Sigmoid colon (tissue), 7 donors: ENCODE measurements at regions of chr1 and their contacts with region 1.

Region 1: DNA sequence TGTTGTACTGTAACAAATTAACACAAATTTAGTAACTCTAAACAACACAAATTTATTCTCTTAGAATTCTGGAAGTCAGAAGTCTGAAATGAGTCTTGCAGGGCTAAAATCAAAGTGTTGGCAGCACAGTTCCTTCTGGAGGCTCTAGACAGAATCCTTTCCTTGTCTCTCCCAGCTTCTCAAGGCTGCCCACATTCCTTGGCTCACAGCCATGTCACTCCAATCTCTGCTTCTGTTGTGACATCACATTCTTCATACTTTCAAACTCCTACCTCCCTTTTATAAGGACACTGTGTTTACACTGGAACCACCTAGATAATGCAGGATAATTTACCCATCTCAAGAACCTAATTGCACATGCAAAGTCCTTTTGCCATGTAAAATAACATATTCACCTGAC is 225.0 kb upstream of the PRMT6 start:
- DNase-seq: no peak
- H3K4me3 ChIP-seq: no peak overlapping the region
- H3K27ac ChIP-seq: no peak overlapping the region
- H3K4me1 ChIP-seq: peaks cover 0 to 15% (median 5%) of the 10 kb centered on the region in 4 donors
- H3K27me3 ChIP-seq: no peaks in the 10 kb centered on the region
- CTCF ChIP-seq: no peak
- EP300 ChIP-seq: no peak
- POLR2A ChIP-seq: no peak

Region 2: GRCh38 chr1:106676021-106676420 is 155.5 kb before region 1 on chr1:
- intact Hi-C with region 1: no loop called
- DNase-seq: no peak
- H3K4me3 ChIP-seq: no peak overlapping the region
- H3K27ac ChIP-seq: no peak overlapping the region
- H3K4me1 ChIP-seq: peaks cover 0 to 15% (median 6%) of the 10 kb centered on the region in 4 donors
- H3K27me3 ChIP-seq: no peaks in the 10 kb centered on the region
- CTCF ChIP-seq: no peak
- EP300 ChIP-seq: no peak
- POLR2A ChIP-seq: no peak

Region 3: GRCh38 chr1:106727173-106727572 is 104.3 kb before region 1 on chr1:
- intact Hi-C with region 1: no loop called
- DNase-seq: no peak
- H3K4me3 ChIP-seq: no peak overlapping the region
- H3K27ac ChIP-seq: no peak overlapping the region
- H3K4me1 ChIP-seq: peaks cover 0 to 10% (median 4%) of the 10 kb centered on the region in 4 donors
- H3K27me3 ChIP-seq: no peaks in the 10 kb centered on the region
- CTCF ChIP-seq: no peak
- EP300 ChIP-seq: no peak
- POLR2A ChIP-seq: no peak

Region 4: DNA sequence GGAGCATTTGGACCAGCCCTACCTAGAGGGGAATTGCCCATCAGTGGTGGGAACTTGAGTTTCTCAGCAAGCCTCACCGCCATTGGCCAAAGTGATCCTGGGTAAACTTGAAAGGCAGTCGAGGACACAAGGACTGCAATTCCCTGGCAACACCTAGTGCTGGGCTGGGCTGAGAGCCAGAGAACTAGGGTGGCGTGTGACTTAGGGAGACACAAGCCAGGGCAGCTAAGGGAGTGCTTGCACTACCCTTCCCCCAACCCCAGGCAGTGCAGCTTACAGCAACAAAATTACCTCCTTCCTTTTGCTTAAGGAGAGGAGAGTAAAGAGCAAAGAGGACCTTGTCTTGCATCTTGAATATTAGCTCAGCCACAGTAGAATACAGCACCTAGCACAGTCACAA is 48.0 kb after region 1 on chr1:
- intact Hi-C with region 1: loop called (anchors 5 kb)
- DNase-seq: peak; percentile 92
- H3K4me3 ChIP-seq: no peak overlapping the region
- H3K27ac ChIP-seq: peak overlapping the region in 3 of 4 donors; percentile 66 to 77 (median 67)
- H3K4me1 ChIP-seq: peaks cover 0 to 20% (median 15%) of the 10 kb centered on the region in 4 donors
- H3K27me3 ChIP-seq: no peaks in the 10 kb centered on the region
- CTCF ChIP-seq: no peak
- EP300 ChIP-seq: peak in 3 of 4 donors; percentile 64 to 84 (median 70)
- POLR2A ChIP-seq: no peak